MCF 10A (cell line): ENCODE measurements at regions of chr11 and their contacts with region 1.

Region 1: GRCh38 chr11:106322111-106322510 is 244.6 kb downstream of the AASDHPPT start:
- DNase-seq: no peak
- H3K4me3 Mint-ChIP-seq: no peak overlapping the region
- H3K27ac Mint-ChIP-seq: no peak overlapping the region
- H3K4me1 Mint-ChIP-seq: no peaks in the 10 kb centered on the region
- H3K27me3 Mint-ChIP-seq: no peaks in the 10 kb centered on the region
- CTCF ChIP-seq: no peak

Region 2: GRCh38 chr11:105829084-105829483 is 493.0 kb before region 1 on chr11:
- CTCF ChIA-PET with region 1: no interaction called
- POLR2A ChIA-PET with region 1: no interaction called
- intact Hi-C with region 1: no loop called
- DNase-seq: no peak
- H3K4me3 Mint-ChIP-seq: no peak overlapping the region
- H3K27ac Mint-ChIP-seq: no peak overlapping the region
- H3K4me1 Mint-ChIP-seq: no peaks in the 10 kb centered on the region
- H3K27me3 Mint-ChIP-seq: no peaks in the 10 kb centered on the region
- CTCF ChIP-seq: no peak

Region 3: GRCh38 chr11:106306942-106307341 is 15.2 kb before region 1 on chr11:
- CTCF ChIA-PET with region 1: interaction called, 21 read pairs
- POLR2A ChIA-PET with region 1: no interaction called
- intact Hi-C with region 1: no loop called
- DNase-seq: peak; percentile 33
- H3K4me3 Mint-ChIP-seq: no peak overlapping the region
- H3K27ac Mint-ChIP-seq: no peak overlapping the region
- H3K4me1 Mint-ChIP-seq: no peaks in the 10 kb centered on the region
- H3K27me3 Mint-ChIP-seq: no peaks in the 10 kb centered on the region
- CTCF ChIP-seq: no peak

Region 4: GRCh38 chr11:106585061-106585460 is 262.9 kb after region 1 on chr11:
- CTCF ChIA-PET with region 1: interaction called, 6 read pairs
- POLR2A ChIA-PET with region 1: no interaction called
- intact Hi-C with region 1: loop called (anchors 2 kb)
- DNase-seq: peak; percentile 39
- H3K4me3 Mint-ChIP-seq: no peak overlapping the region
- H3K27ac Mint-ChIP-seq: no peak overlapping the region
- H3K4me1 Mint-ChIP-seq: no peaks in the 10 kb centered on the region
- H3K27me3 Mint-ChIP-seq: no peaks in the 10 kb centered on the region
- CTCF ChIP-seq: peak; percentile 23